Common myeloid progenitor, CD34-positive (primary cell): ENCODE measurements at regions of chr10 and their contacts with region 1.

Region 1: DNA sequence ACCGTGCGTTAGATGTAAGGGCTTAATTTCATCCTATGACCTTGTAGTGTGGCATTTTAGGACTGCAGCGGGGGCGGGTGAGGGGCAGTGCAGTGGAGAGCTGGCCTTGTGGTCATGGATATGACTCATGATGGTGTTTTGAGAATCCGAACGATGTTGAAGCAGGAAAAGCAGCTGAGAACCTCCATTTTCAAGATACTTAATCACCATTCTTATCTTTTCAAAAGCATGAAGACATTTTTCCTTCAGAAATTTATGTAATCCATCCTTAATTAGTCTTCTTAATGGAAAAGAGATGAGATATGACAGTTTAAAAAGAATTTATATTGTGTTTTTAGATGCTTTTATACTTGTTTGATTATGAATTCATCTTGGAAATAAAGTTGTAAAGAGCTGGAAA is 9.6 kb downstream of the ATP5F1C start:
- DNase-seq: peak in 2 of 3 donors; percentile 32 to 37
- H3K4me3 ChIP-seq: no peak overlapping the region
- H3K27ac ChIP-seq: peak overlapping the region in 1 of 2 experiments; percentile 4
- H3K4me1 ChIP-seq: peaks cover 0 to 2% (median 0%) of the 10 kb centered on the region in 4 experiments
- H3K27me3 ChIP-seq: no peaks in the 10 kb centered on the region

Region 2: DNA sequence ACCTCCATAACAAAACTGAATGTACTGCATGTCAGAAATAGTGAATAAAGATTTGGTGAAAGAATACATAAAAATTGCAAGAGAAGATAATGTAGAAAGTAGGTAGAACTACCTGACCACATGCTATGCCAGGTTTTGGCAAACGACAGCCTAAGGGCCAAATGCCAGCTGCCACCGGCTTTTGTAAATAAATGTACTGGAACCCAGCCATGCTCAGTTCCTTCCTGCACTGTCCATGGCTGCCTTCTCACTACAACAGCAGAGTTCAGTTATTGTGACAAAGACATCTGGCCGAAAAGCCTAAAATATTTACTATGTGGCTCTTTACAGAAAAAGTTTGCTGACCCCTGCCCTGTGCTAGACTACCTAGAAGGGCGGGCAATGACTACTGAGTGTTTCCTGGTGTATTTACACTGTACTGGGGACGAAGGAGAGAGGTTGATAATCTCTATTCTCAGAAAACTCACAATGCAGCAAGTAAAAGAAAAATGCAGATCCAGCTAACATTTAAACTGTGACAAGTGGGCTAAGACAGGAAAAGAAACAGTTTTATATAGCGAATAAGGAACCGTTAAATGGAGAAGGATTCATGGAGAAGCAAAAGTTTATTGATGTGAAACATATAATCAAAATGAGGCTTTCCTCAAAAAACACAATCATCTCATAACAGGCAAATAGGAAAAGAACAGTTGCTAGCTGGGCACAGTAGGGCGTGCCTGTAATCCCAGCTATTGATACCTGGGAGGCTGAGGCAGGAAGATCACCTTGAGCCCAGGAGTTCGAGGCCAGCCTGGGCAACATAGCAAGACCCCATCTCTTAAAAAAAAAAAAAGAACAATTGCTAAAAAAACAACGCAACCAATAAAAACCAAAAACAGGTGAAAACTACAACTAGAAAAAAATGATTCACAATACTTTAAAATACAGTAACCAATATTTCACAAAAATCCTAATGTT is 23.5 kb before region 1 on chr10:
- CTCF ChIA-PET with region 1: no interaction called
- POLR2A ChIA-PET with region 1: no interaction called
- DNase-seq: peak in 1 of 3 donors; percentile 41
- H3K4me3 ChIP-seq: peak overlapping the region in 4 of 7 experiments; percentile 13 to 51 (median 24)
- H3K27ac ChIP-seq: peak overlapping the region; percentile 67 to 72
- H3K4me1 ChIP-seq: peaks cover 0 to 32% (median 17%) of the 10 kb centered on the region in 4 experiments
- H3K27me3 ChIP-seq: no peaks in the 10 kb centered on the region

Region 3: DNA sequence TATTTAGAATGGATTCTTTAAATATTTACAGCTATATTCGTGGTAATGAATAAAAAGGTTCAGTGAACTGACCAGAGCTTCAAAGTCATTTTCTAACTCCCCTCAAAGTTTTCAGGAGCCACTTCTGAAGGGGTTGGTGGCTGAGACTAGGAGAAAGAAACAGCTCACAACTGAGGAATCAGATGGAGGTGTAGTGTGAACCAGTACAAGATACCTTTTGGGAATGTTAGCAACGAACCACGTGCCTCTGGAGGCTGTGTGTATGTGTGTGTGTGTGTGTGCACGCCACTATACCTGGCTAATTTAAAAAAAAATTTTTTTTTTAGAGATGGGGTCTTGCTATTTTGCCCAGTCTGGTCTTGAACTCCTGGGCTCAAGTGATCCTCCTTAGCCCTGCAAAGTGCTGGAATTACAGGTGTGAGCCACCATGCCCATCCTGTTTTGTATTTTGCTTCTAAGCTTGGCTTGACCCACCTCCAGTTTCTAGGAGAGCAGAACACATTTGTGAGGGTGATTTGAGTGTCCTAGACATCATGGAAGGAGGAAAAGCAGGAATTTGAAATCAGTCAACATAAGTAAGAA is 11.2 kb after region 1 on chr10:
- CTCF ChIA-PET with region 1: interaction called, 11 read pairs
- POLR2A ChIA-PET with region 1: no interaction called
- DNase-seq: no peak
- H3K4me3 ChIP-seq: no peak overlapping the region
- H3K27ac ChIP-seq: no peak overlapping the region
- H3K4me1 ChIP-seq: no peaks in the 10 kb centered on the region
- H3K27me3 ChIP-seq: no peaks in the 10 kb centered on the region